Right cardiac atrium (tissue), 5 donors: ENCODE measurements at regions of chr1 and their contacts with region 1.

Region 1: GRCh38 chr1:10540277-10541005 is 65.7 kb downstream of the PEX14 start:
- DNase-seq: peak; percentile 62 to 81 (median 77)
- ATAC-seq: peak; percentile 72 to 76
- H3K4me3 ChIP-seq: no peak overlapping the region
- H3K27ac ChIP-seq: peak overlapping the region; percentile 46
- H3K4me1 ChIP-seq: peaks cover 14% of the 10 kb centered on the region
- H3K27me3 ChIP-seq: no peaks in the 10 kb centered on the region

Region 2: GRCh38 chr1:10328180-10328963 is 212.1 kb before region 1 on chr1:
- intact Hi-C with region 1: no loop called
- DNase-seq: no peak
- ATAC-seq: no peak
- H3K4me3 ChIP-seq: no peak overlapping the region
- H3K27ac ChIP-seq: no peak overlapping the region
- H3K4me1 ChIP-seq: no peaks in the 10 kb centered on the region
- H3K27me3 ChIP-seq: no peaks in the 10 kb centered on the region

Region 3: GRCh38 chr1:10575616-10576015 is 35.2 kb after region 1 on chr1:
- intact Hi-C with region 1: loop called in 1 of 4 experiments (anchors 5 kb)
- DNase-seq: no peak
- ATAC-seq: no peak
- H3K4me3 ChIP-seq: no peak overlapping the region
- H3K27ac ChIP-seq: no peak overlapping the region
- H3K4me1 ChIP-seq: no peaks in the 10 kb centered on the region
- H3K27me3 ChIP-seq: no peaks in the 10 kb centered on the region

Region 4: GRCh38 chr1:10612436-10613160 is 72.2 kb after region 1 on chr1:
- intact Hi-C with region 1: loop called in 1 of 4 experiments (anchors 5 kb)
- DNase-seq: peak in 1 of 3 donors; percentile 68
- ATAC-seq: peak; percentile 78 to 88
- H3K4me3 ChIP-seq: no peak overlapping the region
- H3K27ac ChIP-seq: peak overlapping the region; percentile 66
- H3K4me1 ChIP-seq: no peaks in the 10 kb centered on the region
- H3K27me3 ChIP-seq: no peaks in the 10 kb centered on the region

Region 5: DNA sequence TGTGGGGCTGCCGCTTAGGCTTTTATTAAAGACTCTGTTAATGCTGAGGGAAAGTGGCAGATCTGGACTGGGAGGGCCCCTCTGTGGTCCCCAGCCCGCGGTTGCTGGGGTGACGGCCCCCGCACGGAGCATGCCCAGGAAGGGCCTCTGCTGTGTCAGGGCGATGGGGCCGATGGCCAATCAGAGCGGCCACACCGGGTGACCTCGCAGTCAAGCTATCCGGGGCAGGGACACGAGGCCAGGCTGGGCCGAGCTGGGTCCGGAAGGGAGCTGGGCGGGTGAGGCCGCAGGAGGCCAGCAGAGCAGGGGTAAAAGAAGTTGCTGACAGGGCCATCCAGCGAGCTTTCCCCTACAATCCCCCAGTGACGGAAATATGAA is 110.9 kb after region 1 on chr1:
- intact Hi-C with region 1: no loop called
- DNase-seq: no peak
- ATAC-seq: peak in 1 of 2 donors; percentile 35
- H3K4me3 ChIP-seq: no peak overlapping the region
- H3K27ac ChIP-seq: no peak overlapping the region
- H3K4me1 ChIP-seq: no peaks in the 10 kb centered on the region
- H3K27me3 ChIP-seq: no peaks in the 10 kb centered on the region